Activated CD4-positive, alpha-beta T cell treated with anti-CD3 and anti-CD28 coated beads for 36 hours (primary cell): ENCODE measurements at regions of chr6 and their contacts with region 1.

Region 1: GRCh38 chr6:26156076-26156849 is 69.0 kb downstream of the HFE start:
- DNase-seq: peak; percentile 91
- ATAC-seq: peak; percentile 39
- H3K4me3 Mint-ChIP-seq: peak overlapping the region; percentile 86
- H3K27ac Mint-ChIP-seq: peak overlapping the region; percentile 97
- H3K4me1 Mint-ChIP-seq: peaks cover 32% of the 10 kb centered on the region
- H3K27me3 Mint-ChIP-seq: no peaks in the 10 kb centered on the region

Region 2: GRCh38 chr6:26025894-26026832 is 130.1 kb before region 1 on chr6:
- CTCF ChIA-PET with region 1: interaction called, 5 read pairs
- POLR2A ChIA-PET with region 1: interaction called, 69 read pairs
- intact Hi-C with region 1: no loop called
- DNase-seq: peak; percentile 96
- ATAC-seq: peak; percentile 39
- H3K4me3 Mint-ChIP-seq: peak overlapping the region; percentile 81
- H3K27ac Mint-ChIP-seq: peak overlapping the region; percentile 98
- H3K4me1 Mint-ChIP-seq: peaks cover 51% of the 10 kb centered on the region
- H3K27me3 Mint-ChIP-seq: no peaks in the 10 kb centered on the region

Region 3: DNA sequence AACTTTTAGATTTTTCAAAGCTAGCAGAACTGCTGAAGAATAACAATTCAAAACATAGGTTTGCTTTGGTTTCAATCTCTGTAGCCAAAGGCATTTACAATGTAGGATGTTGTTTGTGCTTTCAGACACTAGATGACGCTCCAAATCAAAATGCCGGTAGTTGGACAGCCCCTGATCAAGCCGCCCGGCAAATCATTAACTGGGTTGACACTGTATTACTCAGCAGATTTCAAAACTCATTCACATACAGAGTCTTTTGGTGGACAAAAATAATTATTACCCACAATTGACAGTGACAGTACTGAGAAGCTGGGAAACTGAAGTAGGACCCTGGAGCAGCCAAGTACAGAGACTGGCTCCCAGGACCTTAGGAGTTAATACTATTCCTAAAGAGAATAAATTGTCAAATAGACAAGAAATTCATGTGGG is 90.3 kb before region 1 on chr6:
- CTCF ChIA-PET with region 1: no interaction called
- POLR2A ChIA-PET with region 1: interaction called, 10 read pairs
- intact Hi-C with region 1: no loop called
- DNase-seq: peak; percentile 72
- ATAC-seq: peak; percentile 95
- H3K4me3 Mint-ChIP-seq: no peak overlapping the region
- H3K27ac Mint-ChIP-seq: no peak overlapping the region
- H3K4me1 Mint-ChIP-seq: peaks cover 2% of the 10 kb centered on the region
- H3K27me3 Mint-ChIP-seq: no peaks in the 10 kb centered on the region

Region 4: GRCh38 chr6:26175428-26176181 is 19.3 kb after region 1 on chr6:
- CTCF ChIA-PET with region 1: interaction called, 9 read pairs
- POLR2A ChIA-PET with region 1: interaction called, 19 read pairs
- intact Hi-C with region 1: loop called (anchors 1 kb)
- DNase-seq: peak; percentile 69
- ATAC-seq: peak; percentile 14
- H3K4me3 Mint-ChIP-seq: peak overlapping the region; percentile 30
- H3K27ac Mint-ChIP-seq: peak overlapping the region; percentile 80
- H3K4me1 Mint-ChIP-seq: peaks cover 33% of the 10 kb centered on the region
- H3K27me3 Mint-ChIP-seq: no peaks in the 10 kb centered on the region

Region 5: DNA sequence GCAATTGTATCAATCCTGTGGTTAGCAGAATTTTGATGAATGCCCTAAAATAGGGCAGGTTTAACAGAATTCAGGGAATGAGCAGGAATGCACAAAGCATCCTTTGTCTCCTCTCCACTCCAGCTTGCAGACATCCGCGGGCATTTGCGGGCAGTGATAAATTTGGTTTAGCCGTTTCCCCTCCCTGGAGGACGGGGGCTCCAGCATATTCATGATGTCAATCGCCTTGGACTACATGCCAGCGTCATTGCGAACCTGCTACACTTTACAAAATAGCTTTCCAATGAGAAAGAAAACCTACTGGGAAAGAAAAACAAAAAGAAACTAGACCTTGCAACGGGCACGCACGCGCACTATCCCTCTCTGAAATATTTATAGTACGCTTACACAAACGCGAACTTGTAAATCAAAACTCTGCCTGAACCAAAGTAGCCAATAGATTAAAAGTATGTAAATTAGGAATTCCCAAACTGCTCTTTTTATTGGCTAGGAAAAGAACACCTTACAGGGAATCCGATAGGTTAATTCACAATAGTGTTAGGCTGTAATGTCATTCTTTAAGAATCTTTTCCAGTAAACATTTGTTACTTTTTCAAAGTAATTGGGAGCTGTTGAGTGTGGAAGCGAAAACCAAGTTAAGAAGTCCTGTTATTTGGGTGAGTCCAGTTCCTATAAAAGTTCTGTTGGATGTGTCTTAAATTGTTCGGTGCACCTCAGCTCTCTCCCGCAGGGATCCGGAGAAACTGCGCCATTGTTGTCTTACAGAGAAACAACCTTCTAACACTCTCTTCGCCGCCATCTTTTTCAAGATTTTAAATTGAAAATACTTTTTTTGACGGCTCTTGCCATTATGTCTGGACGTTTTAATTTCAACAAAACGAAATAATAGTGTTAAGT is 67.6 kb after region 1 on chr6:
- CTCF ChIA-PET with region 1: no interaction called
- POLR2A ChIA-PET with region 1: interaction called, 10 read pairs
- intact Hi-C with region 1: no loop called
- DNase-seq: peak; percentile 79
- ATAC-seq: peak; percentile 86
- H3K4me3 Mint-ChIP-seq: no peak overlapping the region
- H3K27ac Mint-ChIP-seq: no peak overlapping the region
- H3K4me1 Mint-ChIP-seq: peaks cover 8% of the 10 kb centered on the region
- H3K27me3 Mint-ChIP-seq: no peaks in the 10 kb centered on the region

Region 6: GRCh38 chr6:26285143-26286134 is 129.2 kb after region 1 on chr6:
- CTCF ChIA-PET with region 1: no interaction called
- POLR2A ChIA-PET with region 1: interaction called, 25 read pairs
- intact Hi-C with region 1: loop called in 1 of 2 experiments (anchors 1 kb)
- DNase-seq: peak; percentile 98
- ATAC-seq: peak; percentile 80
- H3K4me3 Mint-ChIP-seq: peak overlapping the region; percentile 88
- H3K27ac Mint-ChIP-seq: peak overlapping the region; percentile 99
- H3K4me1 Mint-ChIP-seq: peaks cover 14% of the 10 kb centered on the region
- H3K27me3 Mint-ChIP-seq: peaks cover 3% of the 10 kb centered on the region

Region 7: DNA sequence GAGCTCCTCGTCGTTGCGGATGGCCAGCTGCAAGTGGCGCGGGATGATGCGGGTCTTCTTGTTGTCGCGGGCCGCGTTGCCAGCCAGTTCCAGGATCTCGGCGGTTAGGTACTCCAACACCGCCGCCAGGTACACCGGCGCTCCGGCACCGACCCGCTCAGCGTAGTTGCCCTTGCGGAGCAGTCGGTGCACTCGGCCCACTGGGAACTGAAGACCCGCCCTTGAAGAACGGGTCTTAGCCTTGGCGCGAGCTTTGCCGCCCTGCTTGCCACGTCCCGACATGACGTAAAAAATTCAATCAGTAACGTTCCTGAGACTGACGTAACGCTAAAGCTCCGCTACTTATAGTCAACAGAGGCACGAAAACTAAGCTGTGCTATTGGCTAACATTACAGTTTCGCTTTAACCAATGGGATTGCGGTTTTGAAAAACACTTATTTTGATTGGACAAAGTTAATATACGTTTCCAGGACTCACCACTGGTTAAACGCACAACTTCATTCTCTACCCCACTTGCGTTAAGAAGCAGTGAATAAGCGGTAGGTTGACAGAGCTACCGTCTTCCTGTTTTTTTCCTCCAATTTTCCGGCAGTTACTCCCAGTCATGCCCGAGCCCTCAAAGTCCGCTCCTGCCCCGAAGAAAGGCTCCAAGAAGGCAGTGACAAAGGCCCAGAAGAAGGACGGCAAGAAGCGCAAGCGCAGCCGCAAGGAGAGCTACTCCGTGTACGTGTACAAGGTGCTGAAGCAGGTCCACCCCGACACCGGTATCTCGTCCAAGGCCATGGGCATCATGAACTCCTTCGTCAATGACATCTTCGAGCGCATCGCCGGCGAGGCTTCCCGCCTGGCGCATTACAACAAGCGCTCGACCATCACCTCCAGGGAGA is 1682.0 kb after region 1 on chr6:
- CTCF ChIA-PET with region 1: no interaction called
- POLR2A ChIA-PET with region 1: interaction called, 6 read pairs
- intact Hi-C with region 1: loop called in 1 of 2 experiments (anchors 5 kb)
- DNase-seq: peak; percentile 89
- ATAC-seq: peak; percentile 74
- H3K4me3 Mint-ChIP-seq: no peak overlapping the region
- H3K27ac Mint-ChIP-seq: no peak overlapping the region
- H3K4me1 Mint-ChIP-seq: peaks cover 23% of the 10 kb centered on the region
- H3K27me3 Mint-ChIP-seq: peaks cover 9% of the 10 kb centered on the region